WTC11 (cell line): ENCODE measurements at regions of chr1 and their contacts with region 1.

Region 1: GRCh38 chr1:201348211-201348566 is 29.3 kb downstream of the TNNT2 start:
- DNase-seq: peak; percentile 81
- ATAC-seq: peak; percentile 87
- H3K4me3 Mint-ChIP-seq: no peak overlapping the region; the same call in 1 of the 2 replicates
- H3K27ac Mint-ChIP-seq: 0 out of 2 replicates have a peak overlapping the region, but pooled peaks have one; percentile 10
- H3K4me1 Mint-ChIP-seq: peaks cover 40% of the 10 kb centered on the region
- H3K27me3 Mint-ChIP-seq: no peaks in the 10 kb centered on the region; the same call in 1 of the 2 replicates
- CTCF ChIP-seq: peak; percentile 74

Region 2: GRCh38 chr1:201224666-201225370 is 123.4 kb before region 1 on chr1:
- CTCF ChIA-PET with region 1: interaction called, 15 read pairs
- POLR2A ChIA-PET with region 1: no interaction called
- DNase-seq: no peak
- ATAC-seq: no peak
- H3K4me3 Mint-ChIP-seq: no peak overlapping the region
- H3K27ac Mint-ChIP-seq: no peak overlapping the region
- H3K4me1 Mint-ChIP-seq: no peaks in the 10 kb centered on the region
- H3K27me3 Mint-ChIP-seq: peaks cover 5% of the 10 kb centered on the region
- CTCF ChIP-seq: no peak

Region 3: GRCh38 chr1:201261771-201262465 is 86.3 kb before region 1 on chr1:
- CTCF ChIA-PET with region 1: interaction called, 58 read pairs
- POLR2A ChIA-PET with region 1: no interaction called
- DNase-seq: no peak
- ATAC-seq: no peak
- H3K4me3 Mint-ChIP-seq: no peak overlapping the region
- H3K27ac Mint-ChIP-seq: no peak overlapping the region
- H3K4me1 Mint-ChIP-seq: peaks cover 14% of the 10 kb centered on the region
- H3K27me3 Mint-ChIP-seq: peaks cover 11% of the 10 kb centered on the region
- CTCF ChIP-seq: no peak

Region 4: GRCh38 chr1:201282931-201283829 is 65.0 kb before region 1 on chr1 and contains the start of gene PKP1:
- CTCF ChIA-PET with region 1: interaction called, 27 read pairs
- POLR2A ChIA-PET with region 1: no interaction called
- DNase-seq: peak; percentile 44
- ATAC-seq: peak; percentile 83
- H3K4me3 Mint-ChIP-seq: peak within 1 kb of the TSS; percentile 63
- H3K27ac Mint-ChIP-seq: no peak within 1 kb of the TSS
- H3K4me1 Mint-ChIP-seq: peaks cover 13% of the 10 kb centered on the region
- H3K27me3 Mint-ChIP-seq: peaks cover 45% of the 10 kb centered on the region
- CTCF ChIP-seq: no peak
- total RNA-seq, gene PKP1: 0.18 to 0.41 TPM (median 0.24 TPM) in 3 replicates

Region 5: DNA sequence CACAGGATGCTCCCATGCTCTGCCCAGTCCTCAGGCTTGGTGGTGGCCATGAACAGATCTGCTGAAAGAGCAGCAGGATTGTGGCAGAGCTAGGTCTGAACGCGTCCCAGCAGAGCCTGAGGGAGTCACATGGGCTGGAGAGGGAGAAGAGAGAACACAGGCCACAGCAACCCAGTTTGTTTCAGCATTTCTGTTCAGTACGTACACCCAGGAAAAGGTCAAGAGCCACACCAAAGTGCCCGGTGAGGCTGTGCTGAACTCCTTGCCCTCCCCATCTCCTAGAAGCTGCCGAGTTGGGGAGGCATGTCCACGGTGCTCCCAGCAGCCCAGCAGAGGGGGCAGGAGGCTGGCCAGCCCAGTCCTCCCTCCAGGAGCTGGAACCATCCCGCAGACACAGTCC is 59.4 kb before region 1 on chr1:
- CTCF ChIA-PET with region 1: interaction called, 27 read pairs
- POLR2A ChIA-PET with region 1: no interaction called
- DNase-seq: no peak
- ATAC-seq: no peak
- H3K4me3 Mint-ChIP-seq: no peak overlapping the region
- H3K27ac Mint-ChIP-seq: 0 out of 2 replicates have a peak overlapping the region, but pooled peaks have one; percentile 15
- H3K4me1 Mint-ChIP-seq: peaks cover 24% of the 10 kb centered on the region
- H3K27me3 Mint-ChIP-seq: peaks cover 15% of the 10 kb centered on the region
- CTCF ChIP-seq: no peak

Region 6: DNA sequence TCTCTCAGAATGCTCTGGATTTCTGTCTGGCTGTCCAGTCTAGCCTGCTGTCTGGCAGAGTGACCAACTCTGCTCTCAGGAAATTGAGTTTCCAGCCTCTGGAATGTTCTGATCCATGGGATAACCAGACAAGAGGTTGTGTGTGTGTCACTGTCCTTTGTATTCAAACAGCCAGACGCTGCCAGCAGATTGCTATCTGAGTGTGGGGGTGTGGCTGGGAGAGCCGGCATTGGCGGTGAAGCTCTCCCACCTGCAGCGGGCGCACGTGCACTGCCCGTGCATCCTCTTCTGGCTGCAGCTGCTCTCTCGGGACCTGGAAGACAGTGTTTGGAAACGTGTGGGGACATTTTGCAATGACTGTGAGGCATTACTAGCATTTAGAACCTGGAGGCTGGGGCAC is 38.8 kb before region 1 on chr1:
- CTCF ChIA-PET with region 1: interaction called, 55 read pairs
- POLR2A ChIA-PET with region 1: no interaction called
- DNase-seq: peak; percentile 78
- ATAC-seq: peak; percentile 92
- H3K4me3 Mint-ChIP-seq: no peak overlapping the region
- H3K27ac Mint-ChIP-seq: no peak overlapping the region
- H3K4me1 Mint-ChIP-seq: peaks cover 12% of the 10 kb centered on the region
- H3K27me3 Mint-ChIP-seq: peaks cover 32% of the 10 kb centered on the region
- CTCF ChIP-seq: no peak

Region 7: DNA sequence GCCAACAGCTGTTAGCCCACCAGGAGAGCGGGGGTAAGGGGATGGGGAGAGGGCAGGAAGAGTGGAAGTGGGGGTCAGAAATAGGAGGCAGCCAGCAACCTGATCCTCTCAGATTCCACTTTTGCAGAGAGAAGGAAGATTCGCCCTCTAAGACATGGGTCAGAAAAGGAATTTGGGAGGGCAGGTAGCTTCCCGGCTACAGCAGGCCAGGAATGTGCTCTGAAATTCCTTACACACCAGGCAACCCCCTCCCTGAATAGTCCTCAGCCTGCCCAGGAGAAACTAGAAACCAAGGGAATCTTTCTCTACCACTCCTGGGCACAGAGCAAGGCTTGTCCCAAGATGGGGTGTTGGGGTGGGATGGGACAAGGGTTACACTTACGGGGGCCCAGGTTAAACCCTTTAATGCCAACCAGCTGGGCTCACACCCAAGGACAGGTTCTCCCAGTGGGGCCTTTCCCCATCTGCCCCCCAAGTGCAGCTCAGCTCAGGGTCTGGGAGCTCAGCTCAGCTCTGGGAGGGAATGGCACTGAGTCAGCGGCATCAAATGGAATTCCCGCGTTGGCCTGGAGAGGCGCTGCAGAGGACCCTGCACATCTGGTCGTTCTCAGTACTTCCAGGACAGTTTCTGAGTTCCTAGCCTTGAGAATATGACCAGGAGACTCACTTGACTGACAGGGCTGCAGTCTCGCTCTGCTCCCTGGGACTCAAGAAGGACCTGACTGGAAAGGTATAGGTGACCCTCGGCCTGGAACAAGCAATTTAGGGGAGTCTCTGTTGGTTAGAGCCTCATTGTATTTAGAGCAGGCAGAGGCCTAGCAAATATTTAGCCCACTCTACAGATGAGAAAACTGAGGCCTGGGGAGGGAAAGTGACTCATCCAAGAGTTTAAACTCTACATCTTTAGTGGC is 28.5 kb after region 1 on chr1:
- CTCF ChIA-PET with region 1: interaction called, 31 read pairs
- POLR2A ChIA-PET with region 1: interaction called, 4 read pairs
- DNase-seq: peak; percentile 86
- ATAC-seq: peak; percentile 81
- H3K4me3 Mint-ChIP-seq: peak overlapping the region; percentile 58
- H3K27ac Mint-ChIP-seq: peak overlapping the region; percentile 98
- H3K4me1 Mint-ChIP-seq: peaks cover 54% of the 10 kb centered on the region
- H3K27me3 Mint-ChIP-seq: peaks cover 7% of the 10 kb centered on the region; the same call in 1 of the 2 replicates
- CTCF ChIP-seq: peak; percentile 56

Region 8: DNA sequence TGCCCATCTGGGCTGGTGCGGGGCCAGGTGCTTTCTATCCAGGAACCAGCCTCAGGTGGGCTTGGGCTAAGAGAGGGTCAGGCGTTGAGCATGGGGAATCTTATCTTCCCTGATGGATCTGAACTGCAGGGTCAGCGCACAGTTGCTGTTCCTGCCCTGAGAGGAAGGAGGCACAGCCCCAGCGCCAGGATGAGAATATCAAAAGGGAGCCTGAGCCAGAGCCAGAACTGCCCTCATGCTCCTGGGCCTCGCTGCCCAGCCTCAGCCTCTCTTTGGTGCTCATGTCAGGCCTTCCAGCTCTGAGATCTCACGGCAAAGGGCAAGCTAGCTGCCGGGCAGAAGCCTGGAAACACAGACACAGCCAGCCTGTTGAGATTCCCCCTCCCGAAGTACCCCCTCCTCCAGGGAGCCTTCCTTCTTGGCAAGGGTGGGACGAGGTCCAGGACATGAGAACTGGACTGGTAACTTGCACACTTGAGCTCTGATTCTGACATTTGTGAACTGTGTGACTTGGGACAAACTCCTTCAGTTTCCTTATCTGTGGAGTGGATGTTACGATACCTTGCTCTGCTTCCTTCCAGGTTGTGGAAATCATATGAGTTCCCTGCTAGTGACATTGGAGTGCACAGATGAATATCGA is 52.1 kb after region 1 on chr1:
- CTCF ChIA-PET with region 1: no interaction called
- POLR2A ChIA-PET with region 1: no interaction called
- DNase-seq: no peak
- ATAC-seq: peak; percentile 21; the same call in 1 of the 2 replicates
- H3K4me3 Mint-ChIP-seq: peak overlapping the region; percentile 60
- H3K27ac Mint-ChIP-seq: no peak overlapping the region
- H3K4me1 Mint-ChIP-seq: peaks cover 20% of the 10 kb centered on the region
- H3K27me3 Mint-ChIP-seq: peaks cover 8% of the 10 kb centered on the region; the same call in 1 of the 2 replicates
- CTCF ChIP-seq: no peak

Region 9: DNA sequence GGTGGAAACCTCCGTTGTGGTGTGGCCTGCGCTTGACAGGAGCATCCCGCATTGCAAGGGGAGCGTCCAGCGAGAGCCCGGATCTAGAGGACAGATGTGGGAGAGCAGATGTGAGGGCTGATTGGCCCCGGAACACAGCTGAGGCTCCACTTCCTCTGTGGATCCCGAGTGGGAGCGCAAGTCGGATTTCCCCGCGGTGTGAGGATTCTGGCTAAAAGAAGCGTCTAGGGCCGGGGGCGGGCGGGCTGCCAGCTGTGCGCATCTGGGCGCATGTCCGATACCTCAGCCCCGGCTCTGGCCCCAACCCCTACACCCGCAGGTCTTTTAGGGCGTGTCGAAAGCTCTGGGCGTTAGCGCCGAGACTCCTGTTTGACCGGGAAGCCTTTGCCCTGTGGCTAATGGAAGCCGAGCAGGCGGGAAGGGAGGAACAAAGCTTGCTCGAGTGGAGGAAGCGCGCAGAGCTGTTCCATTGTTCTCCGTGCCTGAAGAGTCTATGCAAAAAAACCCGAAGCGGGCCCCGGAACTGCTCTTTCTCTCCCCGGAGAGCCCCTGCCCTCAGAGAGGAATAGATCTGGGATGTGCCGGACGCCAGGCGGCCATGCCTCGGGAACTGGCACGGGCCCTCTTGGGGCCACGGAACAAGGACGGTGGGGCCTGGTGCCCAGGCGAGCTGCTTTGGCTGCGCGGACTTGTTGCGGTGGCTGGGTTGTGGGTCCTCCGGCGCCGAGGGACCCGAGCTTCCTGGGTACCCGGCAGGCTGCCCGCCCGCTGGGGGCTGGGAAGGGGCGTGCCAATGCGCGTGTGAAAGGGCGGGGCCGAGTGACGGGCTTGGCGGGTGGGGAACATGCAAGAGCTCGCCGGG is 301.8 kb after region 1 on chr1:
- CTCF ChIA-PET with region 1: no interaction called
- POLR2A ChIA-PET with region 1: no interaction called
- DNase-seq: peak; percentile 92
- ATAC-seq: peak; percentile 46
- H3K4me3 Mint-ChIP-seq: peak overlapping the region; percentile 79
- H3K27ac Mint-ChIP-seq: peak overlapping the region; percentile 82; the same call in 1 of the 2 replicates
- H3K4me1 Mint-ChIP-seq: peaks cover 55% of the 10 kb centered on the region
- H3K27me3 Mint-ChIP-seq: peaks cover 17% of the 10 kb centered on the region
- CTCF ChIP-seq: no peak

Region 10: GRCh38 chr1:202164271-202165037 is 816.3 kb after region 1 on chr1:
- CTCF ChIA-PET with region 1: no interaction called
- POLR2A ChIA-PET with region 1: no interaction called
- DNase-seq: no peak
- ATAC-seq: no peak
- H3K4me3 Mint-ChIP-seq: no peak overlapping the region
- H3K27ac Mint-ChIP-seq: no peak overlapping the region
- H3K4me1 Mint-ChIP-seq: peaks cover 43% of the 10 kb centered on the region
- H3K27me3 Mint-ChIP-seq: no peaks in the 10 kb centered on the region; the same call in 1 of the 2 replicates
- CTCF ChIP-seq: no peak